Aorta (tissue), 5 donors: ENCODE measurements at regions of chr3 and their contacts with region 1.

Region 1: GRCh38 chr3:87771341-87772192 is 287.2 kb downstream of the CGGBP1 start:
- DNase-seq: peak in 1 of 2 donors; percentile 44
- ATAC-seq: no peak
- H3K4me3 ChIP-seq: no peak overlapping the region
- H3K27ac ChIP-seq: no peak overlapping the region
- H3K4me1 ChIP-seq: no peaks in the 10 kb centered on the region
- H3K27me3 ChIP-seq: no peaks in the 10 kb centered on the region

Region 2: DNA sequence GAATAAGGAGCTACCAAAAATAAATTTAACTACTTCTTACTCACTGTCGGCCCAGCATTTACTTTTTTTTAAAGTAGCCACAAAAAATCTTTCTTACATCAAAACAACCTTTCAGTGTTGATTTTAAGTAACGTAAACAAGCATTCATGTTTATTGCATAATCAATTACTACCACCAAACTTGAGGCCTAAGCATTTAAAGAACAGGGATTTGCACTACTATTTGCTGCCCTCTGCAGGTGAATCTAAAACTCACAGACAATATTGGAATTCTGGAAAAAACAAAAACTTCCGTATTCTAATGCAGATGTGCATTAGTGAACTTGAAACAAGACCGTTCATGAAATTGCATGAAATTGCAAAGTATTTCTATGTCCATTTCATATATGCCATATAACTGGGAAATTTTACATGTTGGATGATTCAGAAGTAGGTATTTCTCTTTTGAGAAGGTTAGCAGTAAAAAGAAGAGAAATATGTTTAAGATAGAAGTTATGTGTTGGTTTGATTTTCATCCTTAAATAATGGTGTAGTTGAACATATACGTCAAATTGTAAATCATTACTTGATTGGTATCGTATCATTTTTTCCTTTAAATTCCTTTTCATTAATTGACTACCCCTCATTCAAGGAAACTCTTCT is 231.7 kb after region 1 on chr3:
- intact Hi-C with region 1: loop called in 1 of 2 experiments (anchors 10 kb)
- DNase-seq: no peak
- ATAC-seq: no peak
- H3K4me3 ChIP-seq: no peak overlapping the region
- H3K27ac ChIP-seq: no peak overlapping the region
- H3K4me1 ChIP-seq: no peaks in the 10 kb centered on the region
- H3K27me3 ChIP-seq: no peaks in the 10 kb centered on the region

Region 3: DNA sequence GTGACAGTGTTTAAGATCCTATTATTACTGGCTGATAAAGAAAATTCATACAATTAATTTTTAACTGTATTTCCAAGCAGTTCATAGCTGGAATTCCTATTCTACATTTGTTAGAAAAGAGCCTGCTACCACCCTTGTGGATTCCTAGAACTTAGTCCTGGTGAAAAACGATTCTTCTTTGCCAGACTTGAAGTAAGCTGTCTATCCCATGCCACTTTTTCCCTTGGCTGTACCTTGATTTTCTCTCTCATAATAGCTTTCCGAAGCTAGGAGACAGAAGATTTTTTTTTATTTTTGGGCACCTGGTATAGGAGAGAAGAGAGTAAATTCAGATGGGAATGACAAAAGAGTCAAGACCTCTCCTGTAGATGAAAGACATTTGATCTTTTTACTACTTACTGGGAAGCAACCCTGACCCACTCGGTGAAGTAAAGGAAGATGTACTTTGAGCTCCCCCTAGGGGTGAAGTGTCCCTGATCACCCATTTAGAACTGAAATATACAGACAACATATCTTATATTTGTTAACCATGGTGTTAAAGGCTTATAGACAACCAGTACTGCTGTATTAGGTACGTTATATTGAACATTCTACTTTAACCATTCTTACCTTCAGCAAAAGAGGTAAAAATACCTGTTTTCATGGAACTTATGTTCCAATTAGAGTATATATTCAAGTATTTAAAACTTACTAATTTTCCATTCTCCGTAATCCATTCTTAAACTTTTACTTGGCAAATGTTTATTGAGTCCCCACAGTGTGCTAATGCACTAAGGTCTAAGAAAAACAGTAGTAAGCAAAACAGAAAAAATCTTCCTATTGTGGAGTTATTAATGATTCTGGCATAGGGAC is 342.0 kb after region 1 on chr3:
- intact Hi-C with region 1: loop called in 1 of 2 experiments (anchors 10 kb)
- DNase-seq: no peak
- ATAC-seq: peak; percentile 85
- H3K4me3 ChIP-seq: no peak overlapping the region
- H3K27ac ChIP-seq: no peak overlapping the region
- H3K4me1 ChIP-seq: no peaks in the 10 kb centered on the region
- H3K27me3 ChIP-seq: no peaks in the 10 kb centered on the region

Region 4: DNA sequence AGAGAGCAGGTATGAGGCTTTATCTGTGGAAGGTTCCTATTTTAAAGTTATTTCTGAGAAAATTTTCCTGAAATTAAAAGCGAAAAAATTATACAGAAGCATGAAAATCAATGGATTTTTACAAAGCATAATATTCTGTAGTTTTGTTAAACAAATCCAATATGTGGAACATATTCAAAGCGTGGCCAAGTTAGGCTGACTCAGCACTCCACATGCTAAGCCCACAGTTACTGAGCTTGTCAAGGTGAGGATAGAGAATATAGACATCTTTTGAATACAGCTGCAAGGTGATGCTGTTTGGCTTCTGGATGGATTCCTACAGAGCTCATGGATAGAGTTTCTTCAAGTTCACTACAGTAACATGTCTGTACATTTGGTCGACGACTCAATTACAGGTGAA is 680.7 kb after region 1 on chr3:
- intact Hi-C with region 1: no loop called
- DNase-seq: no peak
- ATAC-seq: no peak
- H3K4me3 ChIP-seq: no peak overlapping the region
- H3K27ac ChIP-seq: no peak overlapping the region
- H3K4me1 ChIP-seq: no peaks in the 10 kb centered on the region
- H3K27me3 ChIP-seq: no peaks in the 10 kb centered on the region